A673 (cell line): ENCODE measurements at regions of chr18 and their contacts with region 1.

Region 1: GRCh38 chr18:50266248-50266704 is at the start of gene CFAP53:
- DNase-seq: peak; percentile 87
- H3K4me3 ChIP-seq: peak within 1 kb of the TSS; percentile 44
- H3K27ac ChIP-seq: no peak within 1 kb of the TSS
- H3K4me1 ChIP-seq: peaks cover 5% of the 10 kb centered on the region
- H3K27me3 ChIP-seq: peaks cover 10% of the 10 kb centered on the region
- CTCF ChIP-seq: no peak
- total RNA-seq, gene CFAP53: 0.22 and 0.26 TPM in 2 replicates

Region 2: GRCh38 chr18:50240083-50240563 is 26.2 kb before region 1 on chr18:
- CTCF ChIA-PET with region 1: no interaction called
- POLR2A ChIA-PET with region 1: interaction called, 12 read pairs
- intact Hi-C with region 1: no loop called
- DNase-seq: no peak
- H3K4me3 ChIP-seq: no peak overlapping the region
- H3K27ac ChIP-seq: no peak overlapping the region
- H3K4me1 ChIP-seq: no peaks in the 10 kb centered on the region
- H3K27me3 ChIP-seq: no peaks in the 10 kb centered on the region
- CTCF ChIP-seq: no peak

Region 3: DNA sequence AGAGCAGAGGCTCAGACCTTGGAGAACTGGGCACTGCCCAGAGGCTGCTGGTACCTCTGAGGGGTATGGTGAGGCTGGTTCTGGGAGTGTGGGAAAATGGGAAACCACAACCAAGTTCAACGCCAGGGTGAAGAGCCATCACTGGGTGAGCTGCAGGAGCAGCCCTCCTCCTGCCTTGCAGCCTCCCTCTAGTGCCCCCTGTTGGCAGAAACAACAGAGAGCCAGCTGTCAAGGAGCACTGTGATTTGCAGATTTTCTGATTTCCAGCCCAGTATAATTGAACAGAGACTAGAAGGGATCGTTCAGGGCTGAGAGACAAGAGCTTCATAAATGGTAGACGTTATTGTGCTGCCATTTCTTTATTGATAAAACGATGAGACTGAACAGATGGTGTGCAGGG is 344.1 kb after region 1 on chr18:
- CTCF ChIA-PET with region 1: no interaction called
- POLR2A ChIA-PET with region 1: no interaction called
- intact Hi-C with region 1: no loop called
- DNase-seq: peak; percentile 26
- H3K4me3 ChIP-seq: no peak overlapping the region
- H3K27ac ChIP-seq: no peak overlapping the region
- H3K4me1 ChIP-seq: no peaks in the 10 kb centered on the region
- H3K27me3 ChIP-seq: peaks cover under 1% of the 10 kb centered on the region
- CTCF ChIP-seq: peak; percentile 59